ENCODE measurements at regions of chr1 and their contacts with region 1.

Region 1: DNA sequence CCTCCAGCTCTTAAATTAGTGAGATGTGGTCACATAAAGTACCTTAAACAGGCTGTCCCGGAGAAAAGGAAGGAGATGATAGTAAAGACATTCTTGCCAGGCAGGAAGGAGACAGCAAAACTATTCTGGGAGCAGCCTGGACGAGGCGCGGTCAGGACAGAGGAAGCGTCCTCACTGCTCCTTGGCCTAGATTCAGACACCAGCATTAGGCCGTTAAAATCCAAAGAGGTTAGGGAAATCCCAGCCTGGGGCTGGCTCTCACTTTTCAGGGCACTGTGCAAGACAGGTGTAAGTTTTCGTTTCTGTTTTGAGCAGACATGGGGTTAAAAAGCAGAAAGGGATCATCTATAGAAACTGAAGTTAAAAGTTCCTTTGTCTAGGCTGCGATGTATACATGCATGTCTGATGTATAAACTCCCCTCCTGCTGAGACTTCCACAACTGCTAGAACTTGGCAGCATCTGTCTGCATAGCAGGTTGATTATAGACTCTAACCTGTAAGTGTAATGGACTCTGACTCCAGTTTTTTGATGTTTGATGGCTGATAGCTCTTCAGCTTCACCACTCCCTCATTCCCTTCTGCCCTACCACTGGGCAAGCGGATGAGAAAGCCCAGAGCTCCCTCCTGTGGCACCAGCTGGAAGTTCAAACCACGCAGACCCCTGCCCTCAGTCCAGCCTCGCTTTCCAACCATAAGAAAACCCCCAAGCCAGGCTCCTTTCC is 21.5 kb downstream of the STPG1 start:
- DNase-seq: peak; percentile 37 to 75
- H3K4me3 ChIP-seq: no peak overlapping the region
- H3K27ac ChIP-seq: peak overlapping the region; percentile 42 to 53
- H3K4me1 ChIP-seq: peaks cover 0 to 4% (median 0%) of the 10 kb centered on the region in 4 donors
- H3K27me3 ChIP-seq: peaks cover 0 to 15% of the 10 kb centered on the region in 2 donors
- CTCF ChIP-seq: peak; percentile 50 to 55

Region 2: GRCh38 chr1:24199289-24199900 is 192.6 kb before region 1 on chr1:
- intact Hi-C with region 1: loop called (anchors 2 kb)
- DNase-seq: peak; percentile 47 to 73
- H3K4me3 ChIP-seq: no peak overlapping the region
- H3K27ac ChIP-seq: no peak overlapping the region
- H3K4me1 ChIP-seq: peaks cover 0 to 5% (median 0%) of the 10 kb centered on the region in 4 donors
- H3K27me3 ChIP-seq: peaks cover 0 to 36% of the 10 kb centered on the region in 2 donors
- CTCF ChIP-seq: peak; percentile 82 to 92

Region 3: DNA sequence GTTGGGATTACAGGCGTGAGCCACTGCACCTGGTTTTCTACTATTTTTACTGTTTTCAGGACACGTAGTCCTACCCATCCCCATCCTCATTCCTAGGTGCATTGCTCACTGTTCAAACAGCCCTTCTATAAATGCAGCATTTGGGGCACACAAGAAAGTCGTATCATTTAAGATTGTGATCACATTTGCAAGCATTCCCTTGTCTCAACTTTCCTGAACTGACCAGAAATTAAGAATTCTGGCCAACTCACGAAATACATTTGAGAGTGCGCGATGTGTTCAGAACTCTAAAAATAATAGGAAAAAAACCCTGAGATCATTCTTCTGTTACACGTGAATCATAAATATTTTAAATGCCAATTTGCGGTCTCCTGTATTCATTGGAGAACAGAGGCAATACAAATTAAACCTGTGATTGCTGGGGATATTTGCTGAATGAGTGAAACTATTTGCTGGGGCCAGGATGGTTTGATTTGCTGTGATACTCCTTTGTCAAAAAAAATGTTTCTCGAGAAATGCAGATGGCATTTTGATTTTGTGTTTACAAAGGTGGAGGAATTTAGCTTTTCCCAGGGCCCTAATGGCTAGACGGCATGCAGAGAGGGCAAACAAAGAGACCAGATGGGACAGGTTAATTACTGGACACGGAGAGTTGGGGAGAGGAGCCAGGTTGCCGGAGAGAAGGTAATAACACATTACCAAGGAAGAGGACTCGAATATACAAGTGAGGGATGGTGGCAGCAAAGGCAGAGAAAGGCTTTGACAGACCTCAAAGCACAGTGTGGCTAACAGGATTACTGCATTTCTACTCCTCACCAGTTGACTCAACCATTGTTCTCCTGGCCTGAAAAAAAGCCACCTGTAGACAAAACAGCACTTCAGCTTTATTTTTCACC is 16.9 kb before region 1 on chr1:
- intact Hi-C with region 1: no loop called
- DNase-seq: no peak
- H3K4me3 ChIP-seq: no peak overlapping the region
- H3K27ac ChIP-seq: no peak overlapping the region
- H3K4me1 ChIP-seq: no peaks in the 10 kb centered on the region
- H3K27me3 ChIP-seq: no peaks in the 10 kb centered on the region
- CTCF ChIP-seq: no peak

Region 4: DNA sequence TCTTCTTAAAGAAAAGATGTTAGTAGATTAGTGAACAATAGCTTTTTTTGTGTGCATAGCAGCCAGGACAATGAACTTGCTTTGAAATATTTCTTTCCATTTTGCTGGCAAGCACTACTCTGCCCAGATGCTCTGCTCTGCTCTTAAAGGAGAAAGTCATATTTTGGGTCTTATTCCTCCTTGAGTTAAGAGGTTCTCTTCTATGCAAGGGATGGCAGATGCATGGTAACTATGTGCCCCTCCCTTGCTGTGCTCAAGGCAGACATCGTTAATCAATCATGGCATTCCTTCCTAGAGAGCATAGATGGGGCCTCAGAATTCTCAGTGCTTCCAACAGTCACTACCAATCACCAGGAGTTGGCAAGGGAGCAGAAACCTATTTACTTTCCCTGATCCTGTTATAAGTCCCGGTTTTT is 51.2 kb after region 1 on chr1:
- intact Hi-C with region 1: no loop called
- DNase-seq: no peak
- H3K4me3 ChIP-seq: no peak overlapping the region
- H3K27ac ChIP-seq: no peak overlapping the region
- H3K4me1 ChIP-seq: peaks cover 0 to 3% (median 0%) of the 10 kb centered on the region in 4 donors
- H3K27me3 ChIP-seq: peaks cover 0 to 13% of the 10 kb centered on the region in 2 donors
- CTCF ChIP-seq: no peak